ENCODE measurements at regions of chr1 and their contacts with region 1.

Region 1: GRCh38 chr1:205354259-205354904 is 2.3 kb downstream of the KLHDC8A start:
- DNase-seq: no peak
- H3K4me3 ChIP-seq: no peak overlapping the region
- CTCF ChIP-seq: peak; percentile 73

Region 2: GRCh38 chr1:205344066-205344928 is 10.1 kb before region 1 on chr1:
- CTCF ChIA-PET with region 1: interaction called, 58 read pairs
- POLR2A ChIA-PET with region 1: no interaction called
- DNase-seq: no peak
- H3K4me3 ChIP-seq: peak overlapping the region; percentile 18; the same call in 1 of the 2 replicates
- CTCF ChIP-seq: no peak

Region 3: DNA sequence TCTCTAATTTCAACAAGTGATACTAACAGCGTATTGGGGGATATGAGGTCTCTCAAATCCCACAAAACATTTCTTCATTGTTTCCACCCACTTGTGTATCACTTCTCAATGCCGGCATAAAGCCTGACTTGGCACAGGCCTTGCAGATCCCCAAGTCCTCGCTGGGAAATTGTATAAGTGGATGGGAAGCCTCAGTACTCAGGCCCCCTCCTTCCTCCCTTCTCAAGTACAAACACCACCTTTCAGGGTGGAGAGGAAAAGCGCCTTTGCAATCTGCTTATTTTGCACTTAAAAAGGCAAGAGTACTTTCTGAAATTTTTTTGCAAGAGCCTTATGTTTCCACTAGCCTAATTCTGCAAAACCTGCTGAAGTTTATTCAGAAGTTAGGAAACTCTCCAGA is 28.2 kb after region 1 on chr1:
- CTCF ChIA-PET with region 1: interaction called, 15 read pairs
- POLR2A ChIA-PET with region 1: no interaction called
- DNase-seq: no peak
- H3K4me3 ChIP-seq: no peak overlapping the region
- CTCF ChIP-seq: no peak

Region 4: DNA sequence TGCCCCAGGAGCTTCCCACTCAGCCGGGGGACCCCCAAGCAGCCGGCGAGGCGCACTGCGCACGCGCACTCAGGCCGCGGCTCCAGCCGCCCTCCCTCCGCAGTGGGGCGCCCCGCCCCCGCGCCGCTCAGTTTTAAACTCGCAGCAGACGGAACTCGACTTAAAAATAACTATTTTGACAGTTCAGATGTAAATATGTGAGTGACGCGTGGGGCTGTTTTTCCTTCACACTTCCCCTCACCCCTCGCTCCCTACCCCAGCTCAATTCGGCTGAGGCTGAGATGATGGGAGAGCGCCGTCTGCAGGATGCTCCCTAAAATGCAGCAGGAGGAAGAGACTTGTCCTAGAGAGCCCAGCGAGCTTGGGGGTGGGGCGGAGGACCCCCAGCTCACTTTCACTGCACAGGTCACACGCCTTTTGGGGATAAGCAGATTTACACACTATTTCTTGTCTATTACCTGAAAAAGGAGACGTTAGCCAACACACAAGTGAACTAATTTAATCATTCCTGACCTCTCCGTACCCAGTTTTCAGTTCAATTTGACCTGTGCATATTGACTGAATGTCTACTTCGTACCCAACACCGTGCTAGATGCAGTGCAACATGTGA is 76.4 kb after region 1 on chr1:
- CTCF ChIA-PET with region 1: interaction called, 39 read pairs
- POLR2A ChIA-PET with region 1: no interaction called
- DNase-seq: no peak
- H3K4me3 ChIP-seq: peak overlapping the region; percentile 56
- CTCF ChIP-seq: peak; percentile 82

Region 5: GRCh38 chr1:205477759-205478247 is 123.4 kb after region 1 on chr1:
- CTCF ChIA-PET with region 1: interaction called, 201 read pairs
- POLR2A ChIA-PET with region 1: no interaction called
- DNase-seq: peak; percentile 36
- H3K4me3 ChIP-seq: no peak overlapping the region
- CTCF ChIP-seq: no peak

Measured in AG04449 (cell line).